ENCODE measurements at regions of chr5 and their contacts with region 1.

Region 1: GRCh38 chr5:106940986-106941385 is 729.8 kb downstream of the EFNA5 start:
- DNase-seq: peak; percentile 59
- H3K4me3 Mint-ChIP-seq: peak overlapping the region; percentile 38
- H3K27ac Mint-ChIP-seq: peak overlapping the region; percentile 90
- H3K4me1 Mint-ChIP-seq: peaks cover 22% of the 10 kb centered on the region
- H3K27me3 Mint-ChIP-seq: no peaks in the 10 kb centered on the region
- CTCF ChIP-seq: no peak

Region 2: DNA sequence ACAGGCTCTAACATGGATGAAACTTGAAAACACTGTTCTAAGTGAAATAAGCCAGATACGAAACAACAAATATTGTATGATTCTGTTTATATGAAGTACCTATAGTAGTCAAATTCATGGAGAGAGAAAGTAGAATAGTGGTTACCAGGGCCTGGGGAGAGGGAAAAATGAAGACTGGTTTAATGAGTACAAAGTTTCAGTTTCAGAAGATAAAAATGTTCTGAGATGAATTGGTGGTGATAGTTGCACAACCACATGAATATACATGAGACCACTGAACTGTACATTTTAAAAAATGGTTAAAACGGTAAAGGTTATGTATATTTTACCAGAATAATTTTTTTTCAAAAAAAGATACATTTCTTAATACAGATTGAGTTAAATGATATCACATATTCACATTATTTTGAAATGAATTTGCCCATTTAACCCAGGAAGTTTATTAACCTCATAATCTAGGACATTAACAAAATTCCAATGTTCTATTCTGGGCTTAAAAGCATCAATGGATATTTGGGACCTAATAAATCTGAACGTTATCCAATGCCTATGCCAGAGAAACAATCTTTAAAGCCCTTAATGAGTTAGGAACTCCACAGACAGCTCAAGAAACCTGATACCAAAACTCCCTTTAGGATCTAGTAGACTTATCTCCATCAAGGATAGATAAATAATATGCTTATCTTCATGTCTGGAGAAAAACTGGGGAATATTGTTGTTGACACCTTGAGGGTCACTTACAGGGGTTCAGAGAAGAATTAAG is 208.4 kb after region 1 on chr5:
- CTCF ChIA-PET with region 1: no interaction called
- intact Hi-C with region 1: no loop called
- DNase-seq: no peak
- H3K4me3 Mint-ChIP-seq: no peak overlapping the region
- H3K27ac Mint-ChIP-seq: no peak overlapping the region
- H3K4me1 Mint-ChIP-seq: peaks cover 9% of the 10 kb centered on the region
- H3K27me3 Mint-ChIP-seq: no peaks in the 10 kb centered on the region
- CTCF ChIP-seq: no peak

Region 3: DNA sequence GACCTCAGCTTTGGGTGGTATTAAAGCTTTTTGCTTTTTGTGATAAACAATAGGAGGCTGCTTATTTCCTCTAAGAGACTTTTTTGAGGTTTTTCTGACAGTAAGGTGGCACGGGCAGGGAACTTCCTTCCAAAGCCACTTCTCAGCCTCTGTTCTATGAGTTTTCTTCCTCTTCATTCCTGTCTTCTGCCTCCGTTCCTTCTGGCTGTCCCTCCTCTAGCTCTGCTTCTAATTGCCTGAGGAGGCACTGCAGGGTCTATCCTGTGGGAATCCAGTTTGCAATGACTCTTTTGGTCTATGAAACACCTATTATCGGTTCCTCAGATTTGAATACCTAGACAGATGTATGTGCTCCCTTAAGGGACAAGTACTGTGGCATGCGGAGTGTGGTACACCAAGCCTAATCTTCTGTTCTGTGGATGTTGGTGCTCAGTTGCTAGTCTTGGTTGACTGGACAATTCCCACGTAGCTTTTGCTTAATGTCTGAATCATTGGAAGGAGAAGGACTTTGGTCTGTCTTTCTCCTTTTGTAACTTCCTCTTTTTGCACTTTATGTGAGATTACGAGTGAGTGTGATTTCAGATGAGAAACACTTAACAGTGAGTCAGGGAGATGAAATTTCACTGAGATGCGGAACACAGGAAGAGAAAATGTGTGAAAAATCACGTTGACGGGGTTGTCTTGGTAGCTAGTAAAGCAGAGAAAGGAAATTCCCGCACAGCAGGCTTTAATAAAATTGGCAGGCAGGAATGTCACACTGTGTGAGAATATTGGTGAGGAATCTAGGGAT is 424.5 kb after region 1 on chr5:
- CTCF ChIA-PET with region 1: no interaction called
- intact Hi-C with region 1: loop called (anchors 10 kb)
- DNase-seq: no peak
- H3K4me3 Mint-ChIP-seq: peak overlapping the region; percentile 44
- H3K27ac Mint-ChIP-seq: peak overlapping the region; percentile 84
- H3K4me1 Mint-ChIP-seq: peaks cover 34% of the 10 kb centered on the region
- H3K27me3 Mint-ChIP-seq: no peaks in the 10 kb centered on the region
- CTCF ChIP-seq: no peak